ENCODE measurements at regions of chr6 and their contacts with region 1.

Region 1: DNA sequence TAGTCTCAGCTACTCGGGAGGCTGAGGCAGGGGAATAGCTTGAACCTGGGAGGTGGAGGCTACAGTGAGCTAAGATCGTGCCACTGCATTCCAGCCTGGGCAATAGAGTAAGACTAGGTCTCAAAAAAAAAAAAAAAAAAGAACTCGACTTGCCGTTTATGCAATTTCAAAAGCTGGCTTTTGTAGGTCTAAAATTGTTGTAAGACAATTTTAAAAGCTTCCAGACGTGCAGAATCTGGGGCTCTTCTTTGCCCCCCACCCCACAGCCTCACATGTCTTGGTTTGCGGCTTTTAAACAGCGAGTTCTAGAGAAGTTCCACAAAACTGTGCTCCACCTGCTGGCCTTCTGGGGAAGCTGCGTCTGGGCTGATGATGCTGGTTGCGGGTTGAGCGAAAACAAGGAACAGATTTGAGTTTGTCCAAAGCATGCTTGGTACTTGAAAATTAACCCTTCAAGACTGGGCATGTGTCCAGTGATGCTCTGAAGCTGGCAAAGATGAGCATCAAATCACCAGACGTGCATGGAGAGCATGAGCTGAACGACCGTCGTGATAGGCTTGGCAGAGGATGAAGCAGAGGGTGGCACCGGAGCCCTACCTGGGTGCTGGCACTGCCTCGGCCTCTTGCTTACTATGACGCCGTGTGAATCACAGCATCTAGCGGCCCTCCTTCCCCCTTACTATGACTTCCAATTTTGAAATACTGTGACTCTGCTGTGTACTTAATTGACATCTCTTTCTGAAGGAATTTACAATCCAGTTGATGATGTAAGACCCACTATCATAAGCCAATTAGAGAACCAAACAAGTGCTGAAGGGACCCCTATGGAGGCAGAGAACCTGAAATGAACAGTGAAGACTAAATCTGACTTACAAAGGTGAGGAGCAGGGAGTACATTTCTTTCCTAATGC is 171.4 kb downstream of the GMPR start:
- DNase-seq: peak; percentile 72
- H3K4me3 ChIP-seq: no peak overlapping the region; a peak in 1 of 4 replicates
- H3K27ac ChIP-seq: no peak overlapping the region; a peak in 1 of 4 replicates
- H3K4me1 ChIP-seq: peaks cover 0 to 11% of the 10 kb centered on the region in 2 experiments; a peak in 1 of 4 replicates
- H3K27me3 ChIP-seq: no peaks in the 10 kb centered on the region
- CTCF ChIP-seq: peak; percentile 93
- EP300 ChIP-seq: no peak
- RAD21 ChIP-seq: peak; percentile 86

Region 2: DNA sequence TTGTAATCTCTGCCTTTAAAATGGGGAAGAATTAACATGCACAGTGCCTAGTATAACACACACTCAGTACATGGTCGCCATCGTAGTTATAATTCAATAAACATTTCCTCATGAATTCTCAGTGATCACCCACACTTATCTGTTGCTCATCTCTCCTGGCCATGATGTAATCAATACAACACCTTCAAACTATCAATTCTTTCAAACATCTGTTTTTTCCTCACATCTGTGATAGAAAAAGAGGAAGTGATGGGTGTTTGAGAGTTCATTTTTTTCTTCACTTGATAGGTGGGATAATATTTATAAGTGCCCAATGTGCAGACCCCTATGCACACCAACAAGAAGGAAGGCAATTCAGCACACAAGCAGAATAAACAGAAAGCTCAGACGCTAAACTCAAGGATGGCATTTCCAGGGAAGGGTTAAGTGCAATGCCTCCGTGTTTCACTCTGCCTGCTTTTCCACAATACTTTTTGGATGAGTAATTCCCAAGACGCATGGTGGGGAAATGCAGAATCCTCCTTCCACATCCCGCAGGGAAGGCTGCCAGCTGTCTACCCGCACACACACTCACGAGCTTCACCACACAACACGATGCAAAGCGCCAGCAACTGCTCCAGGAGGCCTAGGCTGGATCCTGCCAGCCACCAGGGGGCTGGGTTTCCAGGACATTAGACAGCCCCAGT is 71.1 kb before region 1 on chr6:
- CTCF ChIA-PET with region 1: interaction called, 289 read pairs
- POLR2A ChIA-PET with region 1: no interaction called
- DNase-seq: peak; percentile 59
- H3K4me3 ChIP-seq: peak overlapping the region in 1 of 2 experiments; percentile 23; a peak in 1 of 4 replicates
- H3K27ac ChIP-seq: peak overlapping the region; percentile 89 to 94
- H3K4me1 ChIP-seq: peaks cover 39 to 58% of the 10 kb centered on the region in 2 experiments
- H3K27me3 ChIP-seq: no peaks in the 10 kb centered on the region
- CTCF ChIP-seq: peak; percentile 83
- EP300 ChIP-seq: peak; percentile 40 to 95; a peak in 3 of 4 replicates
- RAD21 ChIP-seq: peak; percentile 53

Region 3: DNA sequence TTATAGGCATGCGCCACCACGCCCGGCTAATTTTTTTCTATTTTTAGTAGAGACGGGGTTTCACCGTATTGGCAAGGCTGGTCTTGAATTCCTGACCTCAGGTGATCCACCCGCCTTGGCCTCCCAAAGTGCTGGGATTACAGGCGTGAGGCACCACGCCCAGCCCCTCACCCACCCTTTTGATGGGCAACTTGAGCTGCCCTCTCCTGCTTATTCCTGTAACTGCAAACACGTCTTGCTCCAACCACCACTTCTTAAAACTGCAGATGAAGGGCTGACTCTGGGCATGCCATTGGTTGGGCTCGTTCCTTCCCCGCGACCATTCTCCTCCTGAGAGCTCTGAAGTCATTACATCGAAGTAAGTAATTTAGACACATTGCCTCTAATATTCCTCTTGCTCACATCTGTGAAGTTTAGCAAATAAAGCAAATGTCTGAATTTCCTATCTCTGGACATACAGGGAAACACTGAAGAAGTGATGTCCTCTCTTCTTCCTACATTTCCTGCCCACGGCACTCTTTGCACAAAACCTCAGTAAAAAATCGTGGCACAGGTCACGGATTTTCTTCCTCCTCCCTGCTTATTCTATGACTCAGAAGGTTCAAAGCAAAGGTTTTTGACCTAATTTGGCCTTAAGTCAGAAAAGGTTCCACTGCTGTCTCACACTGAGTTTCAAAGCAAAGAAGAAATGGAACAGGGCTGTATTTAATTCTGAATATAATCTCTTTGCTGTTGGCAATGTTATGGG is 53.9 kb before region 1 on chr6:
- CTCF ChIA-PET with region 1: interaction called, 15 read pairs
- POLR2A ChIA-PET with region 1: no interaction called
- DNase-seq: no peak
- H3K4me3 ChIP-seq: no peak overlapping the region
- H3K27ac ChIP-seq: no peak overlapping the region; a peak in 1 of 4 replicates
- H3K4me1 ChIP-seq: peaks cover 8 to 38% of the 10 kb centered on the region in 2 experiments; a peak in 3 of 4 replicates
- H3K27me3 ChIP-seq: no peaks in the 10 kb centered on the region
- CTCF ChIP-seq: no peak
- EP300 ChIP-seq: no peak
- RAD21 ChIP-seq: no peak

Region 4: GRCh38 chr6:16374461-16375195 is 35.2 kb before region 1 on chr6:
- CTCF ChIA-PET with region 1: interaction called, 10 read pairs
- POLR2A ChIA-PET with region 1: no interaction called
- DNase-seq: no peak
- H3K4me3 ChIP-seq: no peak overlapping the region
- H3K27ac ChIP-seq: no peak overlapping the region
- H3K4me1 ChIP-seq: peaks cover 0 to 21% of the 10 kb centered on the region in 2 experiments; a peak in 2 of 4 replicates
- H3K27me3 ChIP-seq: no peaks in the 10 kb centered on the region
- CTCF ChIP-seq: no peak
- EP300 ChIP-seq: no peak
- RAD21 ChIP-seq: no peak

Region 5: DNA sequence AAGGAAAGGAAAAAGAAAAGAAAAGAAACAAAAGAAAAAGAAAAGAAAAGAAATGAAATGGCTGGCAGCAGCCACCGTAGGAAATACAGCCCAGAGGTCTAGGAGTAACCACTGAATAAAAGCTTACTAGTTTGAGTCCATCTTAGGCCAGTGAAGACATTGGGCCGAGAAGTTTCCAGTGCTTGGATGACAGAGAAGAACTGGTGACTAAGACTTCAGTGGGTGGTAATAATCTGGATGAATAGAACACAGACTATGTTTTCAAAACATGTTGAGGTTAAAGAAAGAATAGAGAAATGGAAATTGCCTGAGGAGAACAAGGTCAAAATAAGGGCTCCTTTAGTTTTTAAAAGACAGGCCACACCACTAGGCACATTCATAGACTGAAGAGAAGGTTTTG is 152.7 kb after region 1 on chr6:
- CTCF ChIA-PET with region 1: no interaction called
- POLR2A ChIA-PET with region 1: no interaction called
- DNase-seq: no peak
- H3K4me3 ChIP-seq: no peak overlapping the region
- H3K27ac ChIP-seq: peak overlapping the region in 1 of 2 experiments; percentile 21; a peak in 1 of 4 replicates
- H3K4me1 ChIP-seq: no peaks in the 10 kb centered on the region
- H3K27me3 ChIP-seq: no peaks in the 10 kb centered on the region
- CTCF ChIP-seq: no peak
- EP300 ChIP-seq: no peak
- RAD21 ChIP-seq: no peak